Endothelial cell of umbilical vein (primary cell): ENCODE measurements at regions of chrX and their contacts with region 1.

Region 1: DNA sequence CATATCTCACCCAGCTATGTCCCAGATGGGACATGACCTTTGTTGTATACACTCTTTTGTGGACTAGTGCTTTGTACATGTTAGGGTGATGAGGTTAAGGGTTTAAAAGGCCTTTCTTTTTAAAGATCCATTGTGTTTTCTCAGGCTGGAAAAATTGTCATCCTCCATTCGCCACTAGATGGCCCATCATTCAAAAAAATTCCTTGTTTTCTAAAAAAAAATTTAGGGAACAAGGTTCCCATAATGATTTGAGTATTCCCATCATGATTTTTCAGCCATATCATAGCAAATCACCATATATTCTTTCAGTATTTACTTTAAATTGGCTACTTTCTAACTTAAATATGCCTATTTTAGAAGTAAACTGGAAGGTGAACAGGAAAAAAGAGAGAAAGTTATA is 91.9 kb upstream of the TMEM164 start:
- DNase-seq: peak; percentile 27
- H3K4me3 ChIP-seq: no peak overlapping the region
- H3K27ac ChIP-seq: no peak overlapping the region
- H3K4me1 ChIP-seq: no peaks in the 10 kb centered on the region
- H3K27me3 ChIP-seq: no peaks in the 10 kb centered on the region
- CTCF ChIP-seq: peak; percentile 17 to 18
- POLR2A ChIP-seq: no peak

Region 2: DNA sequence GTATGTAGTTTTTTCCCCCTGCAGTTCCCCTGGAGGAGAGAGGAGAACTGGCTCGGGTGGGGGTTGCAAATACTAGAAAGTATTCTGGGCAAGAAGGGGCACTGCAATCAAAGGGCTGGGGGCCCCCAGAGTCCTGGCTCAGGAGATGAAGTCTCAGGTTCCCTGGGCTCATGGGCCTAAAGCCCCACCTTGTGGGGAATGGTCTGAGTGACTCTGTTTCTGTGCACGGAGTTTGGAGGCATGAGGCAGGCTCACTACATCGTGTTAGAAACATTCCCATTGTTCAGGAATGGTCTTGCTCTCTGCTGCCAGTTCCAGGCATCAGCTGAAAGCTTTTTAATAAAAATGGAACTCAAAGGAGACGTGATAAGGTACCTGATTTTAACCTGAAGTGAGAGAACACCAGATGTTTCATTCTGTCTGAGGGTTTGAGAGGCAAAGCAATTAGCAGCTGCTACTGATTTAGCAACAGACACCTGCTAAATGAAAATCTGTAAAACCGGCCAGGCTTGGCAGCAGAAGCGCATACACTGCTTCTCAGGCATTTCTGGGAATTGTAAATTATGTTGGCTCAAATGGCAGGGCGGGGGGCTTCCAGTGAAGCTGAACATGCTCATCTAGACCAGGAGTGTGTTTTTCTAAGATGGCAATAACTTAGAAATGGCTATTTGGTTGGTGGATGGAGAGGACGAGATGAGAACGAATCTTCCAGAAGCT is 214.6 kb after region 1 on chrX:
- CTCF ChIA-PET with region 1: interaction called, 10 read pairs
- POLR2A ChIA-PET with region 1: no interaction called
- dilution Hi-C with region 1: no loop called
- intact Hi-C with region 1: loop called (anchors 1 kb)
- DNase-seq: peak; percentile 15
- H3K4me3 ChIP-seq: no peak overlapping the region
- H3K27ac ChIP-seq: no peak overlapping the region
- H3K4me1 ChIP-seq: no peaks in the 10 kb centered on the region
- H3K27me3 ChIP-seq: no peaks in the 10 kb centered on the region
- CTCF ChIP-seq: peak in 1 of 2 donors; percentile 40
- POLR2A ChIP-seq: no peak

Region 3: DNA sequence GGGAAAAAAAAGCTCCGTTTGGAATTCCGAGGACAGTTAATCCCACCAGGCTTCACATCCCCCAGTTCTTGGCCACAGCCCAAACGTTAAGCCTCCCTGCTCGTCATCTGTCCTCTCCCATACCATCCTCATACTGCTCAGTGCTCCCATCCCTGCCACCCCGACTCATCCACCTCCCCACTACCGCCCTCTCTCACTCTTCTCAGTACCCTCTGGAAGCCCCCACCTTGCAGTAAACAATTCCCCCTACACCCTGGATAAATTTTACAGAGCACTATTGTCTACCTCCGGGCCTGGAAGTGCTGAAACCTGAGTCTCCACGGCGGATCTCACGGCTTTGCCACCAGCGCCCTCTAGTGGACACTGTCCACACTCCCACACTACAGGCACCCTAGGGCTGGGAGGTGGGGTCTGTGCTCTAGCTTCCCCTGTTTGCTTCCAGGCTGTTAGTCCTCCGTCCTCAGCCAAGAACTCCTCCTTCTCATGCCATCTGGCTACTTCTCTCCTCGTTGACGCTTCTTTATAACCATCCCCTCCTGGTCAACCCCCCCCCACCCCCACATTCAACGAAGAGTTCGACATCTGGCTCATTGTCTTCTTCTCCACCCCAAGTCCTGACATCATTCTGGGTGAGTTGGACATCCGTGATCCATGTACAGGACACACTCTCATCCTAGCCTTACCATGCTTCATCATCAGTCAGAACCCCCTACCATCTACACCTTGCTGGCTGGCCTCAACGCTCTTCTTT is 502.1 kb after region 1 on chrX:
- CTCF ChIA-PET with region 1: no interaction called
- POLR2A ChIA-PET with region 1: no interaction called
- dilution Hi-C with region 1: no loop called
- intact Hi-C with region 1: loop called (anchors 2 kb)
- DNase-seq: peak; percentile 52
- H3K4me3 ChIP-seq: no peak overlapping the region
- H3K27ac ChIP-seq: no peak overlapping the region
- H3K4me1 ChIP-seq: peaks cover 7% of the 10 kb centered on the region
- H3K27me3 ChIP-seq: no peaks in the 10 kb centered on the region
- CTCF ChIP-seq: peak; percentile 67 to 78
- POLR2A ChIP-seq: no peak